BJ (cell line): ENCODE measurements at regions of chr5 and their contacts with region 1.

Region 1: GRCh38 chr5:96141749-96142148 is 180.1 kb upstream of the ELL2 start:
- DNase-seq: no peak
- H3K4me3 ChIP-seq: no peak overlapping the region
- H3K27me3 ChIP-seq: no peaks in the 10 kb centered on the region
- CTCF ChIP-seq: no peak

Region 2: DNA sequence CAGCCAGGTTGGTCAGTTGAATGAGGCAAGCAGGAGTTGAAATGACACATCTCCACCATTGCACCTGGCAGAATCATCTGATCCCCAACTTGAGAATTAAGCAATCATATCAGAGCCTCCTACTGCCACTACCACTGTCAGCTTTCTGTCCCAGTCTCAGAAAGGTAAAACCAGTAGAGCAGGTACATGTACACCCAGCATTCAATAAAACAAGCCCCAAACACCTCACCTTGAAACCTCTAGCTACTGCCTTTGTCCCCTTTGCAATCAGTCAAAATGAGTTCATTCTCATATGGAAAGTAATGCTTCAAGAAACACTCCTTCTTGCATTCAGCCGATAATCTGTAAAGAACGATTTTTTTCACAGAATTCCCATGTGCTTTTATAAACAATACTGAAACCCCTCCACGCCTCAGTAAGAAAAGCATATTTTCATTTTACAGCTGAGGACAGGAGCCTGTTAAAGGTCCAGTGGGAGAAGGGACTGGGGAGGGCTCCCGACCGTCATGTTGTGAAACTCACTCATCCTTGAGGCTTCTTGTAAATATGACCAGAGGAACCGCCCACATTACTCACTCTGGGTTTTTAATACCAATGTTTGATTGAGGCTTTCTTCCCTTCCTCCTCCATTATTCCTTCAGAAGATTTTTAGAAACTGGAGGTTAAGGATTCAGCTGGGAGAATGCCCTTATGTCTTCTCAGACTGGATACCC is 258.0 kb before region 1 on chr5:
- CTCF ChIA-PET with region 1: no interaction called
- POLR2A ChIA-PET with region 1: interaction called, 15 read pairs
- DNase-seq: no peak
- H3K4me3 ChIP-seq: no peak overlapping the region
- H3K27me3 ChIP-seq: no peaks in the 10 kb centered on the region
- CTCF ChIP-seq: no peak